Psoas muscle (tissue), 8 donors: ENCODE measurements at regions of chr9 and their contacts with region 1.

Region 1: DNA sequence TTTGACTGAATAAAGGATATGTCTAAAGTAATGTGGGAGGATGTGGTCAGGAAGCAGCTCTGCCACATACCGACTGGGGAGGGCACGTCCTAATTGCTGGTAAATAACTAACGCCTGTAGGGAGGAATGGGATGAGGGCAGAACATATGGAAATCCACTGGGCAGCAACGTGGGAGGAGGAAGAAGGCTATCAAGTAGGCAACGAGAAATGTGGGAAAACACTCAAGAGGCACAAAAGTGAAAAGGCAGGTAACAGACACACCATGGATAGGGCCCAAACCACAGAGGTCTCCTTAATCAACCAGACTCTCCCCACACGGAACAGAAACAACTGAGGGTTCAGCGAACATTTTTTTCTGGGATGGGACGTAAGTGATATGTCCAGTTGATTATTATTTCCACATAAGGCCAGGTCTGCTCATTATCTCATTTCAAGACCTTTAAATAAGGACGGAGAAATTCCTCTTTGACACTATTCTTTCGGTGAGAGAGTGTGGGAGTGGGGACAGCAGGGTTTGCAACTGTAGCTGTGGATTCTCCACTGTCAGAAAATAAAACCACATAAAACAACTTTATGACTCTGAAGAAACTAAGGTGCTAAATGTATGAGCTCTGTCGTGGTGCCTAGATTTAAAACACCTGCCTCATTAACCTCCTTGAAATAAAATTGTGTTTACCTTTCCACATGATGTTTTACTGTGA is 17.0 kb downstream of the IARS1 start:
- DNase-seq: no peak
- ATAC-seq: no peak
- H3K4me3 ChIP-seq: no peak overlapping the region
- H3K27ac ChIP-seq: no peak overlapping the region
- H3K4me1 ChIP-seq: no peaks in the 10 kb centered on the region
- H3K27me3 ChIP-seq: no peaks in the 10 kb centered on the region
- CTCF ChIP-seq: no peak

Region 2: GRCh38 chr9:92242260-92243136 is 34.0 kb before region 1 on chr9:
- intact Hi-C with region 1: loop called (anchors 5 kb)
- DNase-seq: no peak
- ATAC-seq: no peak
- H3K4me3 ChIP-seq: no peak overlapping the region
- H3K27ac ChIP-seq: no peak overlapping the region
- H3K4me1 ChIP-seq: no peaks in the 10 kb centered on the region
- H3K27me3 ChIP-seq: no peaks in the 10 kb centered on the region
- CTCF ChIP-seq: no peak

Region 3: DNA sequence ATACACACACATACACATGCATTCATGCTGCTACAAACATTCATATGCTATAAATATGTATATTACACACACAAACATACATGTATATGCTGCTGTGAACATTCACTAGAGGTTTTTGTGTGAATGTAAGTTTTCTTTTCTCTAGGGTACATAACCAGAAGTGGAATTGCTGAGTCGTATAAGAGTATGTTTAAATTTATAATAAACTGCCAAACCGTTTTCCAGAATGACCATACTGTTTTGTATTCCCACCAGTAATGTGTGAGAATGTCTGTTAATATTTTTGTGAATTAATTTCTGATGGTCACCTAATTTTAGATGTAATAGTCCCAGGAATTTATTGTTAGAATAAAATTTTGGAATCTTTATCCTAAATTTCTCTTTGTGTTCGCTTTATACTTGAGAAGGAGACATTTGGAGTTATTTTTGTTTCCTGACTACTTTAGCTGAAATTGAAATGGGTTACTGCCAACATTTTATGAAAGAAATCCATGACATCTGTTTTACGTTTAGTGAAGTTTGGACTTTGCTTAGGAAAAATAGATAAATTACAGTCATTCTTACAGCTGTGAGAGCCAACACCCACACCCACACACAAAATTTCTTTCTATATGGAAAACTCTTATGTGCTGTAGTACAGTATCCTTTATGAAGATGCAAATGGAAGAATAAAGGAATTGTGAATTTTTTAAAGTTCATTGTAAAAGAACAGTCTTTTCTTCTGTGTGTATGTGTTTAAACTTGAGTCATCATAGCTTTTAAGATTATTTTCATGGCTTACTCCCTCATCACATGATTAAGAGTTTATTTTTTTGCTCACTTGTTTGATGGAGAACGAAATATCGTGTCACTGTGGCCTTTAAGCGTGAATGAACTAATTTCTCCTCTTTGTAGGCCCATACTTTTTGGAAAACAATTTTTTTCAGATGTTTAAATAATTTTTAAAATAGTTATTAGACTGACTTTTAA is 73.6 kb after region 1 on chr9:
- intact Hi-C with region 1: no loop called
- DNase-seq: no peak
- ATAC-seq: no peak
- H3K4me3 ChIP-seq: no peak overlapping the region
- H3K27ac ChIP-seq: peak overlapping the region; percentile 33
- H3K4me1 ChIP-seq: no peaks in the 10 kb centered on the region
- H3K27me3 ChIP-seq: no peaks in the 10 kb centered on the region
- CTCF ChIP-seq: no peak

Region 4: DNA sequence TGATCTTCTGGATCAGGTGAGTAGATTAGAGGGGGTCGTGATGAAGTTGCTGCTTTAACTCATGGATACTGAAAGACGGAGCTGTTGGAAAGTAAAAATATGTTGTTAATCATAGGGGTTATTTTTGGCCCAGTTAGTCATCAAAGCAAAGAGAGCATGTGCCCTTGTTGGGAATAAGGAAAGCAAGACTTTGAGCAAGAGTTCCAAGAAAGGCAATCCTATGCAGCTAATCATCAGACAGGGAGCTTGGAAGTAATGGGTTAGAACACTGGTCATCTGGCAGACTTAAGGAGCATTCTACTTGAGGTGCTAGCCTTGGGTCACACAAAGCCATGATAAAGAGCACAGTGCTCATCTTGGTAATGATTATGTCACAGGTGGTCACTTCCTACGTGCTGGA is 187.5 kb after region 1 on chr9:
- intact Hi-C with region 1: no loop called
- DNase-seq: no peak
- ATAC-seq: peak; percentile 89 to 92 (median 92)
- H3K4me3 ChIP-seq: peak overlapping the region; percentile 19
- H3K27ac ChIP-seq: peak overlapping the region; percentile 77
- H3K4me1 ChIP-seq: peaks cover 7% of the 10 kb centered on the region
- H3K27me3 ChIP-seq: no peaks in the 10 kb centered on the region
- CTCF ChIP-seq: no peak